MCF 10A (cell line): ENCODE measurements at regions of chr6 and their contacts with region 1.

Region 1: DNA sequence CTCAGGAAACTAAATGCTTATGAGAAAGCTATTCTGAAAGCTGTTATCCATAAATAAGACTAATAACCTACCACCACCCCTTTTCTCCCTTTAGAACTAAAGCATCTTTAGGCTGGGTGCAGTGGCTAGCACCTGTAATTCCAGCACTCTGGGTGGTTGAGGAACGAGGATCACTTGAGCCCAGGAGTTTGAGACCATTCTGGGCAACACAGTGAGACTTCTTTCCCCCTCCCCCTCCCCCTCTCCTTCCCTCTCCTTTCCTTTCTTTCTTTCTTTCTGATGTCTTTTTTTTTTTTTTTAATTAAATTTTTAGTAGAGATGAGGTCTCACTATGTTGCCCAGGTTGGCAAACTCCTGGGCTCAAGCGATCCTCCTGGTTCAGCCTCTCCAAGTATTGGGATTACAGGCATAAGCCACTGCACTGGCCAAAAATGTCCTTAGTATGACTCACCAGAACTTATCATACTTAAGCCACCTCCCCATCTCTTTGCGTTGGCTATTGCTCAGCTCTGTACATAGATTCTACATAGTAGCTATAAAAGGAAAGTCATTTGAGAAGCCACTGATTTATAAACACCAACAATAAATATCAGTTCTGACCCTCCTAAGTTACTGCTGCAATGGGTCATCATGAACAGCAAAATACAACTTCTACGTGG is 54.8 kb upstream of the SPDEF start:
- DNase-seq: peak; percentile 78
- H3K4me3 Mint-ChIP-seq: no peak overlapping the region
- H3K27ac Mint-ChIP-seq: peak overlapping the region; percentile 88
- H3K4me1 Mint-ChIP-seq: peaks cover 7% of the 10 kb centered on the region
- H3K27me3 Mint-ChIP-seq: no peaks in the 10 kb centered on the region
- CTCF ChIP-seq: no peak

Region 2: GRCh38 chr6:34196126-34196830 is 414.7 kb before region 1 on chr6:
- CTCF ChIA-PET with region 1: interaction called, 19 read pairs
- POLR2A ChIA-PET with region 1: interaction called, 4 read pairs
- intact Hi-C with region 1: no loop called
- DNase-seq: peak; percentile 62
- H3K4me3 Mint-ChIP-seq: peak overlapping the region; percentile 66
- H3K27ac Mint-ChIP-seq: no peak overlapping the region
- H3K4me1 Mint-ChIP-seq: peaks cover 7% of the 10 kb centered on the region
- H3K27me3 Mint-ChIP-seq: no peaks in the 10 kb centered on the region
- CTCF ChIP-seq: peak; percentile 97

Region 3: GRCh38 chr6:34273242-34273805 is 337.6 kb before region 1 on chr6:
- CTCF ChIA-PET with region 1: no interaction called
- POLR2A ChIA-PET with region 1: no interaction called
- intact Hi-C with region 1: no loop called
- DNase-seq: no peak
- H3K4me3 Mint-ChIP-seq: no peak overlapping the region
- H3K27ac Mint-ChIP-seq: no peak overlapping the region
- H3K4me1 Mint-ChIP-seq: no peaks in the 10 kb centered on the region
- H3K27me3 Mint-ChIP-seq: no peaks in the 10 kb centered on the region
- CTCF ChIP-seq: no peak

Region 4: GRCh38 chr6:34425498-34426410 is 185.2 kb before region 1 on chr6 and contains the start of gene RPS10:
- CTCF ChIA-PET with region 1: interaction called, 4 read pairs
- POLR2A ChIA-PET with region 1: interaction called, 15 read pairs
- intact Hi-C with region 1: no loop called
- DNase-seq: peak; percentile 89
- H3K4me3 Mint-ChIP-seq: peak within 1 kb of the TSS; percentile 96
- H3K27ac Mint-ChIP-seq: peak within 1 kb of the TSS; percentile 100
- H3K4me1 Mint-ChIP-seq: peaks cover 16% of the 10 kb centered on the region
- H3K27me3 Mint-ChIP-seq: no peaks in the 10 kb centered on the region
- CTCF ChIP-seq: no peak
- total RNA-seq, gene RPS10: 1,490 and 1,644 TPM in 2 replicates

Region 5: DNA sequence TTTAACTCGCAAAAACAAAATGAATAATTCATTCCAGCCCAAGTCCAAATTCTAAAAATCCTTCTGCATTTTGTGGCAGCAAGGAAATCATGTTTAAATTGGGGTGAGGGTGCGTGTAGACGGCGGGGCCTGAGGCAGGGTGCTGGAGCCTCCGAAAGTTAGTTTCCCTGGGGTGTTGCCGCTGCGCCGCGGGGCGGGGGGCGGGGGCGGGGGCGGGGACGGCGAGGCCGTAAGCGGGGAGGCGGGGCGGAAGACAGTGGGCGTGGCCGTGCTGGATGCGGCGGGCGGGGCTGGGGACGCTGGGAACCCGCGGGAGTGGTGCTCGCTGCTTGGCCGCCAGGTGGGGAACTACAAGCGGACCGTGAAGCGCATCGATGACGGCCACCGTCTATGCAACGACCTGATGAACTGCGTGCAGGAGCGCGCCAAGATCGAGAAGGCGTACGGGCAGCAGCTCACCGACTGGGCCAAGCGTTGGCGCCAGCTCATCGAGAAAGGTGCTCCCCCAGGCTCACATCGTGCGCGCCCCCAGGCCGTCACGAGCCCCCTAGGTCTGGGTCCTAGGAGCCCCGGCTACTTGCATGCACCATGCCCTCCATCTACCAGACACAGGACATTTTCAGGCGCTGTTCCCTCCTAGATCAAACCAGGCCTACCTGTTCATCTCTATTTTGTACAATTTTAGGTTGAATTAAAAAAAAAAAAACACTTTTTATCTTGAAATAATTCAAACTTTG is 83.8 kb before region 1 on chr6:
- CTCF ChIA-PET with region 1: interaction called, 18 read pairs
- POLR2A ChIA-PET with region 1: no interaction called
- intact Hi-C with region 1: loop called (anchors 1 kb)
- DNase-seq: peak; percentile 90
- H3K4me3 Mint-ChIP-seq: no peak overlapping the region
- H3K27ac Mint-ChIP-seq: no peak overlapping the region
- H3K4me1 Mint-ChIP-seq: no peaks in the 10 kb centered on the region
- H3K27me3 Mint-ChIP-seq: no peaks in the 10 kb centered on the region
- CTCF ChIP-seq: peak; percentile 67

Region 6: DNA sequence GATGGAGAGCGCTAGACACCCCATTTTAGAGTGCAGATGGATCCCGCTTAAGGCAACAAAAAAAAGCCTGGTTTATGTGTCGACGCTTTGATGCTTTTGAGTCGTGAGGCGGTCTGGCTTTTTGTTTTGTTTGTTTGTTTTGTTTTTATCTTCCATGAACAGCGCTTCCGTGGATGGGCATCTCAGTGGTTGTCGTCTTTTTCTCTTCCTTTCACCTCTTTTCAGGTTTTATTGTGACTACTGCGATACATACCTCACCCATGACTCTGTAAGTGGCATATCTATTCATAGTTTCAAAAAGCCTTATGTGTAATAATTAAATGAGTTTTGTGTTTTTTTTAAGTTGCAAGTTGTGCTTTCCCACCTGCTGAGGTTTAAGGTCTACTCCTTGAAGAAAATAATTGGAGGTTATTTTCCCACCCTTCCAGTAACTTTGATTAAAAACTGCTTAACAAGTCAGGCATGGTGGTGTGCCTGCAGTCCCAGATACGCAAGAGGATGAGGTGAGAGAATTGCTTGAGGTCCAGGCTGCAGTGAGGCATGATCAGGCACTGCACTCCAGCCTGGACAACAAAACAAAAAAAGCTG is 146.8 kb after region 1 on chr6:
- CTCF ChIA-PET with region 1: interaction called, 3 read pairs
- POLR2A ChIA-PET with region 1: interaction called, 4 read pairs
- intact Hi-C with region 1: loop called (anchors 1 kb)
- DNase-seq: no peak
- H3K4me3 Mint-ChIP-seq: no peak overlapping the region
- H3K27ac Mint-ChIP-seq: no peak overlapping the region
- H3K4me1 Mint-ChIP-seq: peaks cover 6% of the 10 kb centered on the region
- H3K27me3 Mint-ChIP-seq: no peaks in the 10 kb centered on the region
- CTCF ChIP-seq: no peak

Region 7: DNA sequence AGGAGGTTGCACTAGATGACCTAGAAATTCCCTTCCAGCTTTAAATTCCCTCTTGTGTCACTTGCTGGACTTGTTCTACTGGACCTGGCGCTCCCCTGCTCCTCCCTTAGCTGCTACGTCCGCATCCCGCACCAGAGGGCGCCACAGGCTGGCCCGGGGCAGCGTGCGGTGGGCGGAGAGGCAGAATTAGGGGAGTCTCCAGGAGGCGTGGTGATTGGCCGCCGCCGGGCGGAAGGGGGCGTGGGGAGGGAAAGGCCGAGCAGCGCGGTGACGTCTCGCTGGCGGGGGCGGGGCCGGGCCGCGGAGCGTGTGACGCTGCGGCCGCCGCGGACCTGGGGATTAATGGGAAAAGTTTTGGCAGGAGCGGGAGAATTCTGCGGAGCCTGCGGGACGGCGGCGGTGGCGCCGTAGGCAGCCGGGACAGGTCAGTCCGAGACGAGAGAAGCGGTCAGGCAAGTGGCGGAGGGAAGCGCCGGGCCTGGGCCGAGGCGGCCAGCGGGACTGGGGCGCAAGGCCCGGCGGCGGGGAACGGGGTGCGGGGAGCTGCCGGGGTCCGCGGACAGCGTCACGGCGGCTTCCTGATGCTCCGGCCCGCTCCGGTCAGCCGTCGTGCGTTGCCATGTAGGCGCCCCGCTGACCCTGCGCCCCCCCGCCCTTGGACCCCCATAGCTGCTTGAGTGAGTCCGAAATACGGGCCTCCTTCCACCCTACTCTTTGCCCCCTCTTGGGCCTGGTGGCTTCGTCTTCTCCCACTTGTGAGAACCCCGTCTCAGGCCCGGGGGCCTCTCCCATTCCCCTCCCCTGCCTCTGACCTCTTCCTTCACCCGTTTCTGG is 731.5 kb after region 1 on chr6 and contains the start of gene PPARD:
- CTCF ChIA-PET with region 1: no interaction called
- POLR2A ChIA-PET with region 1: no interaction called
- intact Hi-C with region 1: no loop called
- DNase-seq: peak; percentile 97
- H3K4me3 Mint-ChIP-seq: peak within 1 kb of the TSS; percentile 82
- H3K27ac Mint-ChIP-seq: peak within 1 kb of the TSS; percentile 95
- H3K4me1 Mint-ChIP-seq: peaks cover 18% of the 10 kb centered on the region
- H3K27me3 Mint-ChIP-seq: peaks cover 12% of the 10 kb centered on the region
- CTCF ChIP-seq: peak; percentile 95
- total RNA-seq, gene PPARD: 13.8 and 16.8 TPM in 2 replicates